Calu3 (cell line): ENCODE measurements at regions of chr10 and their contacts with region 1.

Region 1: GRCh38 chr10:69425511-69426298 is 9.0 kb upstream of the TACR2 start:
- DNase-seq: peak; percentile 75
- H3K4me3 Mint-ChIP-seq: no peak overlapping the region
- H3K27ac Mint-ChIP-seq: peak overlapping the region; percentile 82
- H3K4me1 Mint-ChIP-seq: peaks cover 50% of the 10 kb centered on the region
- H3K27me3 Mint-ChIP-seq: no peaks in the 10 kb centered on the region
- CTCF ChIP-seq: no peak

Region 2: DNA sequence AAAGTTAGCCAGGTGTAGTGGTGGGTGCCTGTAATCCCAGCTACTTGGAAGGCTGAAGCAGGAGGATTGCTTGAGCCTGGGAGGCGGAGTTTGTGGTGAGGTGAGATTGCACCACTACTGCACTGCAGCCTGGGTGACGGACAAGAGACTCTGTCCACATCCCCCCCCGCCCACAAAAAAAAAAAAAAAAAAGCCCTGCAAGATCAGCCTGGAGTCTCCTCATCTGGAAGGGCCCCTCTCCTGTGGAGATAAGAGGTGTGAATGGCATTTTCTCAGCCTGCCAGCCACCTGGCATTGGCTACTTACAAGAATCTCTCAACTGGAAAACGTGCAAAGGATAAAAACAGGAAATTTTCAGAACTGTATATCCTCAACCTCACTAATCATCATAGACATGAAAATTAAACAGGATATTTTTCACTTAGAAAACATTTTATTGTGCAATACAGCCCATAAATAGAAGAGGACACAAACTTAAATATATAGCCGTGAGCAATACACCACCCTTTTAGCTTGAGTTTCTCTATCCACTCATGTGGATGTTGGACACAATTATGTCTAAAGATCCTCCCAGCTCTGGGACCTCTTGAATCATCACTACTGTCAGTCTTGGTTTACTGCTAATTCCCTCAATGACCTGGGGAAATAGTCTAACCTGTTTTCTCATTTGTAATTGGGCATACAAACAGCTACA is 14.3 kb after region 1 on chr10:
- CTCF ChIA-PET with region 1: interaction called, 11 read pairs
- intact Hi-C with region 1: loop called (anchors 2 kb)
- DNase-seq: peak; percentile 76
- H3K4me3 Mint-ChIP-seq: no peak overlapping the region
- H3K27ac Mint-ChIP-seq: peak overlapping the region; percentile 80
- H3K4me1 Mint-ChIP-seq: peaks cover 57% of the 10 kb centered on the region
- H3K27me3 Mint-ChIP-seq: no peaks in the 10 kb centered on the region
- CTCF ChIP-seq: no peak

Region 3: GRCh38 chr10:69451209-69451783 is 25.6 kb after region 1 on chr10 and contains the start of gene TSPAN15:
- CTCF ChIA-PET with region 1: interaction called, 33 read pairs
- intact Hi-C with region 1: loop called (anchors 2 kb)
- DNase-seq: peak; percentile 98
- H3K4me3 Mint-ChIP-seq: peak within 1 kb of the TSS; percentile 97
- H3K27ac Mint-ChIP-seq: peak within 1 kb of the TSS; percentile 78
- H3K4me1 Mint-ChIP-seq: peaks cover 66% of the 10 kb centered on the region
- H3K27me3 Mint-ChIP-seq: no peaks in the 10 kb centered on the region
- CTCF ChIP-seq: no peak
- total RNA-seq, gene TSPAN15: 137 and 165 TPM in 2 replicates

Region 4: DNA sequence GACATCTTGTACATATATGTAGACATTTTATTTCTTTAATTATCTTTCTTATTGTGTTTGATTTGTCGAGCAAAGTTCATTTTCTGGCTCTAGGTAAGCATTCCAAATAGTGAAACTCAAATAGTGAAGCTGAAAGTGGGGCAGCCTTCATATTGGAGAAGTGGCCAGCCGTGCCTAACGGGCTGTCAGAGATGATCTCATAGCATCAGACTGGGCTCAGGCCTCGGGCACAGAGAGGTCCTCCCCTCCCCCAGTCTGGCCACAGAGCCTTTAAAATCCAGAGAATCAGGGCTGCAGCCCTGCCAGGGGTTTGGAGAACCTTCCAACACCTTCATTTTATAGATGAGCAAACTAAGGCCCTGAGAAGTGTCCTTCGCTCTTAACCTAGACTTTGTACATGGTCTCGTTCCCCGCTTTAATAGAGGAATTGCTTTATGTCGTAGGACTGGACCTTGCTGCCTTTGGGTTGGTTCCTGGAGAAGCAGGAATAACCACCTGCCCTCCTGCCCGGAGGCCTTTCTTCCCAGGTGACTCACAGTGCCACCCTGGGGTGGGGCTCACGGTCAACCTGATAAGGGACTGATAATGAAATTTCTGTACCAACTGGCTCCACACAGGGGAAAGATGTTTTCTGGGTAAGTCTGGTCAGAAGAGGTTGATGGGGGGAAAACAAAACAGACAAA is 32.9 kb after region 1 on chr10:
- CTCF ChIA-PET with region 1: interaction called, 33 read pairs
- intact Hi-C with region 1: loop called (anchors 2 kb)
- DNase-seq: peak; percentile 92
- H3K4me3 Mint-ChIP-seq: peak overlapping the region; percentile 52
- H3K27ac Mint-ChIP-seq: peak overlapping the region; percentile 96
- H3K4me1 Mint-ChIP-seq: peaks cover 78% of the 10 kb centered on the region
- H3K27me3 Mint-ChIP-seq: no peaks in the 10 kb centered on the region
- CTCF ChIP-seq: no peak

Region 5: DNA sequence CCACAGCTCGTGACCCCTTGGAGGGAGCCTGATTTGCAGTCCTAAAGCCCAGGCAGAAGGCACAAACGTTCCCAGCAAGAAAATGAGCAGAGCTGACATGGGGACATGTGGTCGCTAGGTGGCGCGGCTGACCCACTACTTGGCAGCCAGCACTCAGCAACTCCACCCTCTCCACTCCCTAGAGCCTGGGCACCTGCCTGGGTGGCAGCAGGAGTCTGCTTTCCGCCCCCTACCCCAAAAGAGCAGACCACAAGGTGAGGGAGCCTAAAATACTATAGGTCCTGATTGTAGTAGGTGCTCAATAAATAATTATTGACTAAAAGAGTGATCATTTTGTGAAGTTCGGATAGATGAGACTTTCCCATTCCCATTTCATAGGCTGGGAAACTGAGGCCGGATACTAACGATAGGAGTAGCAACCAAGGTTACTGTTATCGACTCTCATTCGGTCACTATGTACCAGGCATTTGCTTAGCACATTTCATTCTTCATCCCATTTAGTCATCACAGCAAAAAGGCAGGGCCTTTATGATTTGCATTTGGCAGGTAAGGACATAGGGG is 90.1 kb after region 1 on chr10:
- CTCF ChIA-PET with region 1: interaction called, 6 read pairs
- intact Hi-C with region 1: loop called (anchors 1 kb)
- DNase-seq: peak; percentile 86
- H3K4me3 Mint-ChIP-seq: no peak overlapping the region
- H3K27ac Mint-ChIP-seq: peak overlapping the region; percentile 31
- H3K4me1 Mint-ChIP-seq: peaks cover 10% of the 10 kb centered on the region
- H3K27me3 Mint-ChIP-seq: no peaks in the 10 kb centered on the region
- CTCF ChIP-seq: peak; percentile 89

Region 6: GRCh38 chr10:69639291-69640195 is 213.8 kb after region 1 on chr10:
- CTCF ChIA-PET with region 1: interaction called, 23 read pairs
- intact Hi-C with region 1: loop called (anchors 1 kb)
- DNase-seq: peak; percentile 74
- H3K4me3 Mint-ChIP-seq: no peak overlapping the region
- H3K27ac Mint-ChIP-seq: no peak overlapping the region
- H3K4me1 Mint-ChIP-seq: no peaks in the 10 kb centered on the region
- H3K27me3 Mint-ChIP-seq: peaks cover 18% of the 10 kb centered on the region
- CTCF ChIP-seq: peak; percentile 97